PC-9 (cell line): ENCODE measurements at regions of chr7 and their contacts with region 1.

Region 1: DNA sequence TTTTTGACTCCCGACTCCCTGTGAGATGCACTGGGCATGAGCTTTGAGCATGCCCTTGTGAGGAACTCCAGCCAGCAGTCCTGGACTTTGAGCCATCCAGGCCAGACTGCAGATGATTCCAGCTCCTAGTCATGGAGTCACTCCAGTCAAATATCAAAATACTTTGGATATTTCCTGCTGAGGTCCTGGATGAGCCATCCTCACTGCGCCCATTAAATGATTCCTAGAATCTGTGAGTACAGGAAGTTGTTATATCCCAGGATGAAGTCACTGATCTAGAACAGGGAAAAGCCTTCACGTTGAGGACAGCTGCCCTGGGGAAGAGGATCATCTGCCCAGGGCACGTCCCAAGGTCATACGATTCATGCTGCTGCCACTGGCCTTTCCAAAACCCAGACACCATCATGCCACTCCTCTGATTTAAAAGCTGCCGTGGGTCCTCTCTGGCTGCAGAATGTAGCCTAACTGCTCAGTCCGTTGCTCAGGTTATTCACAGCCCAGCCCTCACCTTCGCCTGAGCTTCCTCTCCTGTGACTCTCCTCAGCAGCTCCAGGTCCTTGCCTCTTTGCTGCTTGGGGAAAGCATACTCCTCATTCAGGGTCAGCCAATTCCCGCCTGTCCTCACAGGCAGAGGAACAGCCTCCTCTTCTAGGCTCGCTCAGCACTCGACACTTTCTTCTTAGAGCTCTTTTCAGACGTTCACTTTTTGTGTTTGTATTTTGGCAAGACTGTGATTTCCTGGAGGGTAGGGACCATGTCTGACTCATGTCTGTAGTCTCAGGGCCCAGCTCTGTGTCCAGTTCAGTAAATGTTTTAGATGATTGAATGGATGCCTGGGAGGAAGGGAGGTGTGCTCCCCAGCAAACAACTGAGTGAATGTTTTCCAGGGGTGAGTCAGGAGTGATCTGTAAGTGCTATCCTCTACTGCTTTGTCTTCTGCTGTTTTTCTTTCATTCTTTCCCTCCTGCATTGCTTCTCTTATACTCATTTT is 157.8 kb downstream of the SNX10 start:
- DNase-seq: peak; percentile 39 to 63
- H3K4me3 ChIP-seq: no peak overlapping the region
- H3K27ac ChIP-seq: peak overlapping the region; percentile 2; the same call in 1 of the 2 replicates
- H3K4me1 ChIP-seq: peaks cover 34% of the 10 kb centered on the region
- H3K27me3 ChIP-seq: no peaks in the 10 kb centered on the region
- CTCF ChIP-seq: no peak

Region 2: DNA sequence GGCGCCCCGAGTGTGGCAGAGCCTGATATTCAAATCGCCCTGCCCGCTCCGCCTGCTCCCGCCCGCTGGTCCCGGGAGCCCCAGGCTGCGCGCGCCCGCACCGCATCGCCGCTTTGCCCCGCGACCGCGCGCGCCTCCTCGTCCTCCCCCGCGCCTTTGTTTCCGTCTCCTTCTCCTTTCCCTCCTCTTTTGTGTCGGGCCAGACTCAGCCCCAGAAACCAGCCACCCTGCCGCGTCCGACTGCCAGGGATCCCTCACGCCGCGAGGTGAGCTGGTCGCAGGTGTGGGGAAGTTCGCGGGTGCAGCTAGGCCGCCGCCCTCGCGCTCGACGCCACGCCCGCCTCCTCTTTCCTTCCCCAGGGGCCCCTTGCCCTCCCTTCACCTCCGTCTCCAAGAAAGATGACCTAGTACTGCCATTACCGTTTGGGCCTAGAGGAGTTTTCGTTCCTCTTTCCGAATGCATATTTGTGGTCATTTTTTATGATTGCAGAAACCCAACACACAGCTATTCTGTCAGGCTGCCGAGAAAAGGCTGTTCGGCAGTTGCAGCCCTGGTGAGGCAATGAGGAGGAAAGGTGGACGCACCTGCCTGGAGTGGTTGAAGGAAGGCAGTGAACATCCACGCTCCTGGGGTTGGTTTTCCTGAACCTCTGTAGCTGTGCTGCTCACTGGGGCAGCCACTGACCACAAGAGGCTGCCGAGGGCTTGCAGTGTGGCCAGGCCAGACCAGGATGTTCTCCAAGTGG is 50.5 kb before region 1 on chr7:
- CTCF ChIA-PET with region 1: no interaction called
- POLR2A ChIA-PET with region 1: no interaction called
- intact Hi-C with region 1: loop called (anchors 2 kb)
- DNase-seq: peak; percentile 63 to 83
- H3K4me3 ChIP-seq: peak overlapping the region; percentile 71
- H3K27ac ChIP-seq: peak overlapping the region; percentile 36
- H3K4me1 ChIP-seq: peaks cover 9% of the 10 kb centered on the region
- H3K27me3 ChIP-seq: no peaks in the 10 kb centered on the region
- CTCF ChIP-seq: peak; percentile 54; the same call in 1 of the 2 replicates

Region 3: GRCh38 chr7:26593393-26593792 is 143.9 kb after region 1 on chr7:
- CTCF ChIA-PET with region 1: no interaction called
- POLR2A ChIA-PET with region 1: no interaction called
- intact Hi-C with region 1: no loop called
- DNase-seq: no peak
- H3K4me3 ChIP-seq: no peak overlapping the region
- H3K27ac ChIP-seq: no peak overlapping the region
- H3K4me1 ChIP-seq: no peaks in the 10 kb centered on the region
- H3K27me3 ChIP-seq: no peaks in the 10 kb centered on the region
- CTCF ChIP-seq: no peak

Region 4: DNA sequence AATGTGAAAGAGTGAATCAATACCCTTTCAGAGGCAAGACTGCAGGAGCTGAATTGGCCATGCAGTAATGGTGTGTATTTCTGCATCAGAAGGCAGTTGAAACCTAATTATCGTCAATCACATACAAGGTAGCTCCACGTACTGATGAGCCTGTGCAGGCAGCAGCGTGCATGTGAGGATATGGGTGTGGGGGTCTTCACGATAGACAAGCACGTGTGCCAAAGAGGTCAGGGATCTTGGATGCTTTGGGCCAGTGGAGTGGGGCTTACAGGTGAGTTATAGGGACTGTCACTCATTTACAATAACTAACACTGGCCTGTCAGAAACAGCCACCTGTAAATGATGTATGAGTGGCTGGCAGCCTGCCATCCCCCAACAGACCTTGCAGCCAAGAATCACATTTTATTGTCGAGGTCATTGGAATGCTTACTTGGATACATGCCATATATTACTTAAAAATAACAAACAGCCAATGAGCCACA is 204.0 kb after region 1 on chr7:
- CTCF ChIA-PET with region 1: no interaction called
- POLR2A ChIA-PET with region 1: no interaction called
- intact Hi-C with region 1: loop called (anchors 5 kb)
- DNase-seq: peak; percentile 88 to 95
- H3K4me3 ChIP-seq: peak overlapping the region; percentile 12; the same call in 1 of the 2 replicates
- H3K27ac ChIP-seq: peak overlapping the region; percentile 58
- H3K4me1 ChIP-seq: peaks cover 50% of the 10 kb centered on the region
- H3K27me3 ChIP-seq: no peaks in the 10 kb centered on the region
- CTCF ChIP-seq: no peak

Region 5: GRCh38 chr7:26760501-26760900 is 311.0 kb after region 1 on chr7:
- CTCF ChIA-PET with region 1: no interaction called
- POLR2A ChIA-PET with region 1: no interaction called
- intact Hi-C with region 1: no loop called
- DNase-seq: no peak
- H3K4me3 ChIP-seq: no peak overlapping the region
- H3K27ac ChIP-seq: no peak overlapping the region
- H3K4me1 ChIP-seq: no peaks in the 10 kb centered on the region
- H3K27me3 ChIP-seq: no peaks in the 10 kb centered on the region
- CTCF ChIP-seq: no peak